ENCODE measurements at regions of chr7 and their contacts with region 1.

Region 1: GRCh38 chr7:114930829-114931655 is 9.1 kb downstream of the MDFIC start:
- DNase-seq: no peak
- ATAC-seq: peak; percentile 45
- H3K4me3 Mint-ChIP-seq: no peak overlapping the region
- H3K27ac Mint-ChIP-seq: no peak overlapping the region
- H3K4me1 Mint-ChIP-seq: peaks cover 34% of the 10 kb centered on the region
- H3K27me3 Mint-ChIP-seq: no peaks in the 10 kb centered on the region

Region 2: DNA sequence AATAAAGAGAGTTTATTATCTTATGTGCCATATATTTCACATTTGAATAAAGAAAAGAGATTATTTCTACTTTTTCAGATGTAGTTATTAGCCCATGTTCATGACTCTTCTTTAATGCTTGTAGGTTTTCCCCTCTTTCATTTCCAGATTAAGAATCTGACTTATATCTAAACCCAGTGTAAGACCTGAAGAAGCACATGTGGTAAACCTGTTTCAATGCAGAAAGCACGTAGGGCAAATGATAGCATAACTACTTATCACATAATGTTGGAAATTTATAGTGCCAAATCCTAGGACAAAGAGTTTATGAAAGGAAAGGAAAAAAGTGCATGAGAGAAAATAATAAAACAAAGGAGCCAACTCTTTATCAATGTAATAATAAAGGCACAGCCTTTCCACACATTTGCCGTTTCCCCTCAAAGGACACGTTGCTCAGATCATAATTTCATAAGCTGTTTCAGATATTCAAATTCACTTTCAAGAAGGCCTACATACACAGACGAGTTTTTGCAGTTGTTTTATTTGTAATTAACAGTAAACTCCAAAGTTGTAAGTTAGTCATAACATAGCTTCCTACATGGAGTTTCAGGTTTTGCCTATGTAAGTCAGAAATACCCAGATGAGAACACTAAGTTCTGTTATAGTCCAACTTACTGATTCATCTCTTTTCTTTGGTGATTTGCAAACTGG is 98.0 kb before region 1 on chr7:
- CTCF ChIA-PET with region 1: no interaction called
- POLR2A ChIA-PET with region 1: no interaction called
- intact Hi-C with region 1: loop called in 1 of 2 experiments (anchors 1 kb)
- DNase-seq: no peak
- ATAC-seq: peak; percentile 95
- H3K4me3 Mint-ChIP-seq: peak overlapping the region; percentile 27
- H3K27ac Mint-ChIP-seq: peak overlapping the region; percentile 95
- H3K4me1 Mint-ChIP-seq: peaks cover 28% of the 10 kb centered on the region
- H3K27me3 Mint-ChIP-seq: peaks cover 13% of the 10 kb centered on the region

Region 3: GRCh38 chr7:114889646-114890285 is 41.3 kb before region 1 on chr7:
- CTCF ChIA-PET with region 1: no interaction called
- POLR2A ChIA-PET with region 1: no interaction called
- intact Hi-C with region 1: loop called (anchors 1 to 2 kb)
- DNase-seq: peak; percentile 14
- ATAC-seq: peak; percentile 99
- H3K4me3 Mint-ChIP-seq: no peak overlapping the region
- H3K27ac Mint-ChIP-seq: peak overlapping the region; percentile 75
- H3K4me1 Mint-ChIP-seq: peaks cover 44% of the 10 kb centered on the region
- H3K27me3 Mint-ChIP-seq: no peaks in the 10 kb centered on the region

Region 4: GRCh38 chr7:115009736-115010440 is 78.8 kb after region 1 on chr7:
- CTCF ChIA-PET with region 1: no interaction called
- POLR2A ChIA-PET with region 1: no interaction called
- intact Hi-C with region 1: loop called in 1 of 2 experiments (anchors 5 kb)
- DNase-seq: no peak
- ATAC-seq: peak; percentile 63
- H3K4me3 Mint-ChIP-seq: no peak overlapping the region
- H3K27ac Mint-ChIP-seq: peak overlapping the region; percentile 72
- H3K4me1 Mint-ChIP-seq: peaks cover 63% of the 10 kb centered on the region
- H3K27me3 Mint-ChIP-seq: no peaks in the 10 kb centered on the region

Region 5: GRCh38 chr7:115116773-115117715 is 186.0 kb after region 1 on chr7:
- CTCF ChIA-PET with region 1: no interaction called
- POLR2A ChIA-PET with region 1: no interaction called
- intact Hi-C with region 1: no loop called
- DNase-seq: no peak
- ATAC-seq: no peak
- H3K4me3 Mint-ChIP-seq: no peak overlapping the region
- H3K27ac Mint-ChIP-seq: no peak overlapping the region
- H3K4me1 Mint-ChIP-seq: no peaks in the 10 kb centered on the region
- H3K27me3 Mint-ChIP-seq: peaks cover 2% of the 10 kb centered on the region

Region 6: GRCh38 chr7:116576350-116577319 is 1645.6 kb after region 1 on chr7:
- CTCF ChIA-PET with region 1: no interaction called
- POLR2A ChIA-PET with region 1: no interaction called
- intact Hi-C with region 1: loop called in 1 of 2 experiments (anchors 5 kb)
- DNase-seq: peak; percentile 23
- ATAC-seq: peak; percentile 74
- H3K4me3 Mint-ChIP-seq: no peak overlapping the region
- H3K27ac Mint-ChIP-seq: no peak overlapping the region
- H3K4me1 Mint-ChIP-seq: peaks cover 10% of the 10 kb centered on the region
- H3K27me3 Mint-ChIP-seq: peaks cover 4% of the 10 kb centered on the region